ENCODE measurements at regions of chr1 and their contacts with region 1.

Region 1: GRCh38 chr1:1349256-1350012 is at the start of gene DVL1:
- DNase-seq: peak; percentile 67 to 79
- ATAC-seq: peak in 7 of 8 donors; percentile 4 to 63 (median 23)
- H3K4me3 ChIP-seq: peak within 1 kb of the TSS; percentile 61 to 80 (median 74)
- H3K27ac ChIP-seq: peak within 1 kb of the TSS; percentile 81 to 95 (median 92)
- H3K4me1 ChIP-seq: peaks cover 34 to 73% (median 67%) of the 10 kb centered on the region in 9 donors
- H3K27me3 ChIP-seq: peaks cover 0 to 30% (median 18%) of the 10 kb centered on the region in 7 donors
- CTCF ChIP-seq: peak; percentile 12 to 64 (median 50)
- total RNA-seq, gene DVL1: 64.7 to 153 (median 78.0) TPM

Region 2: GRCh38 chr1:1307908-1308755 is 41.3 kb before region 1 on chr1 and contains the starts of genes ACAP3 and PUSL1:
- intact Hi-C with region 1: loop called in 2 of 10 experiments (anchors 5 kb)
- DNase-seq: peak; percentile 86 to 89
- ATAC-seq: peak; percentile 65 to 83 (median 76)
- H3K4me3 ChIP-seq: peak within 1 kb of the TSS; percentile 75 to 99 (median 88)
- H3K27ac ChIP-seq: peak within 1 kb of the TSS; percentile 93 to 100 (median 98)
- H3K4me1 ChIP-seq: peaks cover 27 to 54% (median 50%) of the 10 kb centered on the region in 9 donors
- H3K27me3 ChIP-seq: no peaks in the 10 kb centered on the region
- CTCF ChIP-seq: peak in 5 of 9 donors; percentile 4 to 31 (median 18)
- total RNA-seq, gene ACAP3: 24.1 to 60.0 (median 30.4) TPM
- total RNA-seq, gene PUSL1: 5.6 to 11.9 (median 8.2) TPM

Region 3: GRCh38 chr1:1324521-1325287 is 24.7 kb before region 1 on chr1 and contains the starts of genes CPTP and INTS11:
- intact Hi-C with region 1: loop called in 1 of 10 experiments (anchors 2 kb)
- DNase-seq: peak; percentile 94 to 97
- ATAC-seq: peak; percentile 77 to 90 (median 82)
- H3K4me3 ChIP-seq: peak within 1 kb of the TSS; percentile 69 to 100 (median 98)
- H3K27ac ChIP-seq: peak within 1 kb of the TSS; percentile 90 to 99 (median 94)
- H3K4me1 ChIP-seq: peaks cover 11 to 74% (median 53%) of the 10 kb centered on the region in 9 donors
- H3K27me3 ChIP-seq: no peaks in the 10 kb centered on the region
- CTCF ChIP-seq: no peak
- total RNA-seq, gene CPTP: 49.4 to 126 (median 65.4) TPM
- total RNA-seq, gene INTS11: 44.7 to 91.7 (median 56.6) TPM

Region 4: GRCh38 chr1:1507305-1507704 is 157.9 kb after region 1 on chr1:
- intact Hi-C with region 1: no loop called
- DNase-seq: no peak
- ATAC-seq: no peak
- H3K4me3 ChIP-seq: no peak overlapping the region
- H3K27ac ChIP-seq: no peak overlapping the region
- H3K4me1 ChIP-seq: peaks cover 7 to 35% (median 17%) of the 10 kb centered on the region in 9 donors
- H3K27me3 ChIP-seq: no peaks in the 10 kb centered on the region
- CTCF ChIP-seq: no peak

Measured in heart right ventricle (tissue), 16 donors.